ENCODE measurements at regions of chr19 and their contacts with region 1.

Region 1: DNA sequence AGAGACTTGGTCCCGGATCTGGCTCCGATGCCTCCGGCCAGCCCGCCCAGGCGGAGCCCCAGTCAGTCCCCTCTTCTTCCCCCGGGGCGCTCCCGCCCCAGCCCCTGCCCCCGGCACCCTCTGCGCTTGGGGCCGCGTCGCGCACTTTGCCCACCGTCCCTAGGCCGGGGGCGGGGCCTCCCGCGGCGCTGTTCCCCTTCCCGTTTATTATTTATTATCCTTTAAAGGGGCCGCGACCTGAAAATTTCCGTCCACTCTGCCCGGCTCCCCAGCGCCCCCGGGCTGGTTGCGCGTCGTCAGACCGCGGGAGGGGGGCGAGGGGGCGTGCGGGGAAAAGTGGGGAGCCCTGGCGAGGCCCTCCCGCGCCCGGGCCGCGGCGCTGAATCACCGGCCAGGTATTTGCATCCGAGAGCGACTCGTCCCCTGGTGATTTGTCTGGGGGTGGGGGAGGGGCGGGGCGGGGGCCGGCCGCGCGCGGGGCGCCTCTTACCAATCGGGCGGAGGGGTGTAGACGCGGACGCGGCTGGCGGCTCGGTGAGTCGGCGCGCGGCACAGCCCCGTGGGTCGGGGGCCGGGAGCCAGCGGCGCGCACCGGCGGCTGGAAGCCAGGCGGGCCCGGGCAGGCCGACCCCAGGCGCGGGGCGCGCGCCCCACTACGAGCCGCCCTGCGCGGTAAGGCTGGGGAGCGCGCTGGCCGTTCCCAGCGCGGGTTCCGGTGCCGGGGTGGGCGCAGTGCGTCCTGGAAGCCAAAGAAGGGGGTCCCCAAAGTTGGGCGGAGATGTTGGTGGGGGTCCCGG is at the start of gene ARID3A:
- DNase-seq: peak; percentile 93
- ATAC-seq: peak; percentile 78
- total RNA-seq, gene ARID3A: 6.7 TPM

Region 2: GRCh38 chr19:771332-771785 is 154.4 kb before region 1 on chr19:
- intact Hi-C with region 1: loop called (anchors 1 kb)
- DNase-seq: no peak
- ATAC-seq: no peak

Region 3: GRCh38 chr19:970695-971094 is 45.0 kb after region 1 on chr19:
- intact Hi-C with region 1: no loop called
- DNase-seq: no peak
- ATAC-seq: no peak

Region 4: GRCh38 chr19:984165-984967 is 58.6 kb after region 1 on chr19 and contains the start of gene WDR18:
- intact Hi-C with region 1: loop called (anchors 1 kb)
- DNase-seq: peak; percentile 97
- ATAC-seq: peak; percentile 95
- total RNA-seq, gene WDR18: 20.7 TPM

Region 5: DNA sequence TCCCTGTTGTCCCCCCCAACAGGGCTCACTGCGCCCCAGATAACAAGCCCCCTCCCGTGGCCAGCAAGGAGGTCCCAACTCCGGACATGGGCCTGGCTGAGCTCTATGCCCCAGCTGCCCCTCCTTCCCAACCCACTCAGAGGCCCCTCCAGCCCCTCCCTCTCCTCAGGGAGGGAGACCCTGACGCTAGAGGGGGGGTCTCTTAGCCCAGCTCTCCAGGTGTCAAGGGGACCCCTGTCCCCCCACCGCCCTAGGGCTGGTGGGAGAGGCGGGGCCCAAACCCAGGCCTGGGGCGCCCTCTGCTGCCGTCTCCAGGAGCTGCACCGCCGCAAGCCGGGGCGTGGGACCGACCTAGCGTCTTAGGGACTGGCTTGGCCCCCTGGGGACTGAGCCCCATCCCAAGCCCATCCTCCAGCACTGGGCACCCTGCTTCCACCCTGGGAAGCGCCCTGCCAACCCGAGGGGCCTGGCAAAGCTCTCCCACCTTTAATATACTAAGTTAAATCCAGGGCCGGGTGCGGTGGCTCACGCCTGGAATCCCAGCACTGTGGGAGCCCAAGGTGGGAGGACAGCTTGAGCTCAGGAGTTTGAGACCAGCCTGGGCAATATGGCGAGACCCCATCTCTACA is 75.9 kb after region 1 on chr19:
- intact Hi-C with region 1: loop called (anchors 1 kb)
- DNase-seq: peak; percentile 92
- ATAC-seq: peak; percentile 73

Region 6: GRCh38 chr19:1249298-1249989 is 323.7 kb after region 1 on chr19:
- intact Hi-C with region 1: loop called (anchors 10 kb)
- DNase-seq: peak; percentile 98
- ATAC-seq: peak; percentile 17